ENCODE measurements at regions of chrX and their contacts with region 1.

Region 1: DNA sequence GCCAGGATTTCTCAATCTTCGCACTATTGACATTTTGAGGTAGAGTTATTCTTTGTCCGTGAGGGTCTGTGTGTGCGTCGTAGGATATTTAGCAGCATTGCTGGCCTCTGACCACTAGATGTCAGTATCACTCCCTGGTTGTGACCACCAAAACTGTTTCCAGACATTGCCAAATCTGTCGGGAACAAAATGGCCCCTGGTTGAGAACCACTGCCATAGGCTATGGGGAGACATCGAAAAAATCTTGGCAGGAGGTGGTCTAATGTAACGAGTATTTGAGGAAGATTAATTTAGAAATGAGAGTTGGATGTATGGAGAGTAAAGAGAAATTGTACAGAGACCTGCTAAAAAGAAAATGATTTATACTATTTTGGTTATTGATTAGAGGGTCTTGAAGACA is 108.4 kb downstream of the DOCK11 start:
- DNase-seq: peak; percentile 18 to 27
- H3K4me3 ChIP-seq: no peak overlapping the region
- H3K27ac ChIP-seq: no peak overlapping the region
- H3K4me1 ChIP-seq: no peaks in the 10 kb centered on the region
- H3K27me3 ChIP-seq: no peaks in the 10 kb centered on the region
- CTCF ChIP-seq: peak; percentile 56 to 70 (median 65)
- POLR2A ChIP-seq: no peak

Region 2: GRCh38 chrX:118464501-118464900 is 139.5 kb before region 1 on chrX:
- intact Hi-C with region 1: loop called (anchors 5 kb)
- DNase-seq: no peak
- H3K4me3 ChIP-seq: no peak overlapping the region
- H3K27ac ChIP-seq: no peak overlapping the region
- H3K4me1 ChIP-seq: no peaks in the 10 kb centered on the region
- H3K27me3 ChIP-seq: no peaks in the 10 kb centered on the region
- CTCF ChIP-seq: no peak
- POLR2A ChIP-seq: no peak

Region 3: GRCh38 chrX:118807151-118808017 is 203.4 kb after region 1 on chrX:
- intact Hi-C with region 1: loop called (anchors 5 kb)
- DNase-seq: peak; percentile 29 to 42
- H3K4me3 ChIP-seq: no peak overlapping the region
- H3K27ac ChIP-seq: no peak overlapping the region
- H3K4me1 ChIP-seq: no peaks in the 10 kb centered on the region
- H3K27me3 ChIP-seq: no peaks in the 10 kb centered on the region
- CTCF ChIP-seq: peak in 5 of 6 experiments; percentile 23 to 74 (median 54)
- POLR2A ChIP-seq: no peak

Region 4: GRCh38 chrX:119015407-119016237 is 411.6 kb after region 1 on chrX:
- intact Hi-C with region 1: no loop called
- DNase-seq: peak; percentile 21 to 23
- H3K4me3 ChIP-seq: no peak overlapping the region
- H3K27ac ChIP-seq: no peak overlapping the region
- H3K4me1 ChIP-seq: peaks cover 0 to 3% of the 10 kb centered on the region in 2 donors
- H3K27me3 ChIP-seq: no peaks in the 10 kb centered on the region
- CTCF ChIP-seq: no peak
- POLR2A ChIP-seq: no peak

Region 5: DNA sequence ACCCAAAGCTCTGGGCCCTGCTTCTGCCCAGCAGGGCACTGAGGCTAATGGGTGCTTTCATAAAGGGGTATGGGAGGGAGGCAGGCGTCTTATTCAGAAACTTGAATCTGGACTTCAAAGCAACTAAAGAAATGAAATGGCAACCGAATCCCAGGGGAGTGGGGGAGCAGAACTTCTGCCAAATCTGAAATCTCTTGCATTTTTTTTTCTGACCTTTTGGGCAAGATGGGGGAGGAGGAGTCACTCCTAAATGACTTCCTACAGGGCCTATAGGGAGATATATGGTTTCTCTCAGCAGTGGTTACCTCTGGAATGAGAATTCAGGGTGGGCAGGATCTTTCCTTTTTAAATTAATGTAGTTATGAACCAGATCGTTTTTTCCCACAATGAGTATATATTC is 554.2 kb after region 1 on chrX:
- intact Hi-C with region 1: no loop called
- DNase-seq: no peak
- H3K4me3 ChIP-seq: no peak overlapping the region
- H3K27ac ChIP-seq: no peak overlapping the region
- H3K4me1 ChIP-seq: no peaks in the 10 kb centered on the region
- H3K27me3 ChIP-seq: no peaks in the 10 kb centered on the region
- CTCF ChIP-seq: no peak
- POLR2A ChIP-seq: no peak

Measured in thyroid gland (tissue), 4 donors.